ENCODE measurements at regions of chr9 and their contacts with region 1.

Region 1: GRCh38 chr9:127869310-127870152 is 7.9 kb downstream of the AK1 start:
- DNase-seq: peak; percentile 96
- ATAC-seq: peak; percentile 78

Region 2: DNA sequence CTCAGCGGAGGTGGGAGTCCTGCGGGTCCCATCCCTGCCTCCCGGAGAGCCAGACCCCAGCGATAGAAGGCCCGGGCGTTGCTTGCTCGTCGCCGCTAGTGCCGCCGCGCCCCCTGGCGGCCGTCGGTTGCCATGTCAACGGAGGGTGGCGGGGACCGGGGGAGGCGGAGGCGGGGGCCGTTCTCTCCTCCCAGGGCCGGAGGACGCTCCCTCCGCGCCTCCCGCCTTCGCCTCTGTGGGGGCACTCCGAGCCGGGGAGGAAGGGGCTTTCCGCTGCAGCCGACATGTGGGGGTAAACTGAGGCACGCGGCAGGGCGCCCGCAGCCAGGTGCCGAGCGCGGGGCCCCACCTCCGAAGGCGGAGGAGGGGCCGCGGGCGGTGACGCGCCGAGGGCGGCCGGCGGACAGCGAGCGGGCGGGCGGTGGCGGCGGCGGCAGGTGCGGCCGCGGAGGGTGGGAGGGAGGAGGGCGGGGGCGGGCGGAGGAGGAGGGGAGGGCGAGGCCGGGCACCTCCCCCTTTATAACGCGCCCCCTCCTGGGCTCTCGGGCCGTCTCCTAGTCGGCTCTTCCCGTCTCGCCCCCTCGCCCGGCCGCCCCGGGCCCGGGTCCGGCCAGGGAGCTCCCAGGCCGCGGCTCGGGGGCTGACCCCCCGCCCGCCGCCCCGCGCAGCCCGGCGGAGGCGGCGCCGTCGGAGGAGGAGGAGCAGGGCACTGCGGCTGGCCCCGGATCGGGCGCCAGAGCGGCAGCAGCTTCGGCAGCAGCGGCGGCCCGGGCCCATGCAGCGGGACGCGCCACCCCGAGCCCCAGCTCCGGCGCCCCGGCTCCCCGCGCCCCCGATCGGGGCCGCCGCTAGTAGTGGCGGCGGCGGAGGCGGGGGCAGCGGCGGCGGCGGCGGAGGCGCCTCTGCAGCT is 84.3 kb before region 1 on chr9:
- intact Hi-C with region 1: loop called (anchors 2 kb)
- DNase-seq: peak; percentile 95
- ATAC-seq: peak; percentile 70

Region 3: GRCh38 chr9:127828262-127829031 is 41.1 kb before region 1 on chr9:
- intact Hi-C with region 1: loop called (anchors 2 kb)
- DNase-seq: peak; percentile 92
- ATAC-seq: peak; percentile 93

Measured in Right ventricle myocardium inferior (tissue), 1 donor.